ENCODE measurements at regions of chr18 and their contacts with region 1.

Region 1: DNA sequence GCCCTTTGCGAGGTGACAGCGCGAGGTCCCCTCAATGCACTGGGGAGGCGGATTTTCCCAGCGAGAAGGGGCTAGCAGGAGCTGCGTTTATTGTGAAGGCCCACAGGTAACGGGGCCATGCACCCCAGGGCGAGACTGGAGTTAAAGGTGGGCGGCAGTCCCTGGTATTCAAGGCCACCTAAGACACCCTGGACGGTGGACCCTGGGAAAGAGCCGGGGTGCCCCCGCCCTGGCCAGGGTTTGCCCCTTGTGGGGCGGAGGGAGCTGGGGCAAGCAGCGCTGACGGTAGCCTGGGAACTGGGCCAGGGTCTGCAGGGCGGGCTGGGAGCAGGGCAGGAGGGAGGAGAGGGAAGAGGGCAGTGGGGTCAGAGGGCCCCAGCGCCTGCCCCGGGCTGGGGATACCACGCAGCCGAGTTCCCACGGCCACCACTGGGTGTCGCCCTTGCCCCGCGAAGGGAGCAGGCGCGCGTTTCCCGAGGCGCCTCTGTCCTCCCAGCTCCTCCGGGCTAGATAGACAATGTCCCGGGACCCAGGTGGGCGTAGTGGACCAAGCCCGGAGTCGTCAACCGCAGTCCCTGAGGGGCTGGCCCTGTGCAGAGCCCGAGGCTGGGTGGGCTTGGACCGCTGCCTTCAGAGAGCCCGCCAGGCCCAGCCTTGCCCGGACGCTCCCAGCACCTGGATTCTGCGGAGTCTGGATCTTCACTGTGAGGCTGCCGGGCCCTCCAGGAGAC is 80.2 kb downstream of the SMAD4 start:
- DNase-seq: peak; percentile 74
- H3K4me3 Mint-ChIP-seq: no peak overlapping the region
- H3K27ac Mint-ChIP-seq: no peak overlapping the region
- H3K4me1 Mint-ChIP-seq: peaks cover 16% of the 10 kb centered on the region
- H3K27me3 Mint-ChIP-seq: no peaks in the 10 kb centered on the region

Region 2: DNA sequence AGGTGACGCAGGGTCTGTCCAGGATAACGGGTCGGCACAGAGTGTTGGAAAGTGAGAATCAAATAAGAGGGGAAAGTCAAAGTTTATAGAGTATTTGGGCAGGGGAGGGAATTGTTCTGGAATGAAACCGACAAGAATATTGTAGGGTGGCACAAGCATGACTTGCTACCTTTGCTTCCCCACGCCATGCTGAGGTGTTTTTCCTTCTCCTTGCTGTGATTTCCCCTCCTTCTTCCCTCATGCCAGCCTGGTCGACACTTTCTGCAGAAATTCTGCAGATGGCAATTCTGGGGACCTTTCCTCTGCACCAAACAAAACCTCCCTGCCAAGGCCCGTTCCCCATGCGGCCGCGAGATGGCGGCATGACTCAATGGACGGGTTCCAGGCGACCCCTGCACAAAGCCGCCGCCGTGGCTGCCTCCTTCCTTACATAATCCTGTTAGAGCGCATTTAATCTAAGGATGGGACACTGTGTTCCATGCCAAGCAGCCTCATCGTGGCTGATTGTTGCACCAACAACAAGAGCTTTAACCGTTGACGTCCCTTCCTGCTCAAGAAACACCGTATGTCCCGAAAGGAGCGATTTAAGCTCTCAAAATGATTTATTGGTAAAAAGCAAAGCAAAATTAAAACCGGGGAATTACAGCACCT is 290.4 kb before region 1 on chr18 and contains the start of gene MRO:
- CTCF ChIA-PET with region 1: interaction called, 17 read pairs
- DNase-seq: peak; percentile 83
- H3K4me3 Mint-ChIP-seq: no peak within 1 kb of the TSS
- H3K27ac Mint-ChIP-seq: no peak within 1 kb of the TSS
- H3K4me1 Mint-ChIP-seq: no peaks in the 10 kb centered on the region
- H3K27me3 Mint-ChIP-seq: peaks cover 17% of the 10 kb centered on the region

Region 3: GRCh38 chr18:51385270-51385669 is 275.0 kb after region 1 on chr18:
- CTCF ChIA-PET with region 1: interaction called, 13 read pairs
- DNase-seq: no peak
- H3K4me3 Mint-ChIP-seq: no peak overlapping the region
- H3K27ac Mint-ChIP-seq: no peak overlapping the region
- H3K4me1 Mint-ChIP-seq: no peaks in the 10 kb centered on the region
- H3K27me3 Mint-ChIP-seq: peaks cover 12% of the 10 kb centered on the region